ENCODE measurements at regions of chr2 and their contacts with region 1.

Region 1: GRCh38 chr2:205947621-205948495 is 138.1 kb downstream of the INO80D start:
- DNase-seq: peak; percentile 72
- ATAC-seq: peak; percentile 94

Region 2: GRCh38 chr2:205766779-205767359 is 181.0 kb before region 1 on chr2:
- intact Hi-C with region 1: loop called (anchors 10 kb)
- DNase-seq: peak; percentile 69
- ATAC-seq: peak; percentile 23